ENCODE measurements at regions of chr6 and their contacts with region 1.

Region 1: GRCh38 chr6:125469915-125470314 is 168.1 kb upstream of the HDDC2 start:
- DNase-seq: no peak

Region 2: GRCh38 chr6:125314019-125314581 is 155.8 kb before region 1 on chr6:
- intact Hi-C with region 1: no loop called
- DNase-seq: peak; percentile 84

Region 3: GRCh38 chr6:125503181-125503580 is 33.3 kb after region 1 on chr6:
- intact Hi-C with region 1: no loop called
- DNase-seq: no peak

Region 4: DNA sequence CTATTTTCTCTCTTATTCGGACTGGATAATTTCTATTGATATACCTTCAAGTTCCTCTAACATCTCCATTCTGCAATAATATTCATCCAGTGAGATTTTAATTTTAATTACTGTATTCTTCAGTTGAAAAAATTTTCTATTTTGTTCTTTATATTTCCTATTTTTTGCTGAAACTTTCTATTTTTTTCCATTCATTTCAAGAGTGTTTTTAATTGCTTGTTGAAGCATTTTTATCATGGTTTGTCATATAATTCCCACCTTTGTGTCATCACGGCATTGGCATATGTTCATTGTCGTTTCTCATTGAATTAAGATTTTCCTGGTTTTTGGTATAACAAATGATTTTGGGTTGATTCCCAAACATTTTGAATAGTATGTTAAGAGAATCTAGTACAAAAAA is 46.7 kb after region 1 on chr6:
- intact Hi-C with region 1: loop called in 1 of 2 experiments (anchors 2 kb)
- DNase-seq: no peak

Region 5: GRCh38 chr6:127207591-127208120 is 1737.7 kb after region 1 on chr6:
- intact Hi-C with region 1: no loop called
- DNase-seq: no peak

Measured in posterior vena cava (tissue), 2 donors.